ENCODE measurements at regions of chr9 and their contacts with region 1.

Region 1: GRCh38 chr9:22052376-22052945 is 43.4 kb upstream of the CDKN2B start:
- DNase-seq: peak; percentile 76
- ATAC-seq: peak; percentile 89
- H3K4me3 Mint-ChIP-seq: no peak overlapping the region
- H3K27ac Mint-ChIP-seq: peak overlapping the region; percentile 65
- H3K4me1 Mint-ChIP-seq: peaks cover 34% of the 10 kb centered on the region
- H3K27me3 Mint-ChIP-seq: no peaks in the 10 kb centered on the region
- CTCF ChIP-seq: no peak

Region 2: DNA sequence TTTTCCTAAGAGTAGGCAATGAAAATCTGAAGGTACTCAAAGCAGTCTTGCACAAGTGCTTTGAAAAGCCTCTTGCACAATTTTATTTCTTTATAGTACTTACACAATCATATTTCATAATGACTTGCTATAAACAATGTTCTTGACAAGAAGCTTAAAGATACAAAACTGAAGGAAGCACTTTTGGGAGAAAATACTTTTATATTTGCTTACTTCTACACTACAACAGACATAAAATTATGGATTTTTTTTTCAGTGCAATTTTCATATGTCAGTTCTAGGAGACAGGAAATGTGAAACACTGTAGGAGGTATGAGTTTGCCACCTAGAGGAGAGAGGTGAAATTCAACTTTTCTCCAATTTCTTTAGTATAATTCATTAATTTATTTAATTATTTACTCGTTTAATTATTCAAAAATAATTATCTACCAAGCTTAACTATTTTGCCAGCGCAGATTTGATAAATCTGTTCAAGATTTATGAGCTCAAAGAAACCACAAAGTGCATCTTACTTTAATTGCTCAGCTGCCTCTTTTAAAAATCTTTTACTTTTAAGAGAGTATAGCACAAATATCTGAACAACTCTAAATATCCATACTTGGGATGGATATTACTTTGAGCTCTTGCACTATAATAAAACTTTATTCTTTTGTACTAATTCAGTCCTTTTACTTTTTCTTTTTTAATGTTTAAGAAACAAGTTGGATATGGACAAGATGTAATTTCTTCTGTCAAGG is 14.3 kb before region 1 on chr9:
- CTCF ChIA-PET with region 1: interaction called, 47 read pairs
- POLR2A ChIA-PET with region 1: no interaction called
- intact Hi-C with region 1: no loop called
- DNase-seq: no peak
- ATAC-seq: peak; percentile 47
- H3K4me3 Mint-ChIP-seq: no peak overlapping the region
- H3K27ac Mint-ChIP-seq: no peak overlapping the region
- H3K4me1 Mint-ChIP-seq: peaks cover 23% of the 10 kb centered on the region
- H3K27me3 Mint-ChIP-seq: no peaks in the 10 kb centered on the region
- CTCF ChIP-seq: peak; percentile 83

Region 3: GRCh38 chr9:22079873-22080341 is 27.4 kb after region 1 on chr9:
- CTCF ChIA-PET with region 1: interaction called, 18 read pairs
- POLR2A ChIA-PET with region 1: interaction called, 7 read pairs
- intact Hi-C with region 1: loop called (anchors 2 kb)
- DNase-seq: peak; percentile 82
- ATAC-seq: peak; percentile 95
- H3K4me3 Mint-ChIP-seq: peak overlapping the region; percentile 16
- H3K27ac Mint-ChIP-seq: peak overlapping the region; percentile 72
- H3K4me1 Mint-ChIP-seq: peaks cover 43% of the 10 kb centered on the region
- H3K27me3 Mint-ChIP-seq: peaks cover 26% of the 10 kb centered on the region
- CTCF ChIP-seq: no peak

Region 4: GRCh38 chr9:22105005-22105722 is 52.7 kb after region 1 on chr9:
- CTCF ChIA-PET with region 1: interaction called, 4 read pairs
- POLR2A ChIA-PET with region 1: no interaction called
- intact Hi-C with region 1: loop called (anchors 5 kb)
- DNase-seq: peak; percentile 48
- ATAC-seq: peak; percentile 97
- H3K4me3 Mint-ChIP-seq: no peak overlapping the region
- H3K27ac Mint-ChIP-seq: no peak overlapping the region
- H3K4me1 Mint-ChIP-seq: peaks cover 16% of the 10 kb centered on the region
- H3K27me3 Mint-ChIP-seq: peaks cover 3% of the 10 kb centered on the region
- CTCF ChIP-seq: no peak

Region 5: DNA sequence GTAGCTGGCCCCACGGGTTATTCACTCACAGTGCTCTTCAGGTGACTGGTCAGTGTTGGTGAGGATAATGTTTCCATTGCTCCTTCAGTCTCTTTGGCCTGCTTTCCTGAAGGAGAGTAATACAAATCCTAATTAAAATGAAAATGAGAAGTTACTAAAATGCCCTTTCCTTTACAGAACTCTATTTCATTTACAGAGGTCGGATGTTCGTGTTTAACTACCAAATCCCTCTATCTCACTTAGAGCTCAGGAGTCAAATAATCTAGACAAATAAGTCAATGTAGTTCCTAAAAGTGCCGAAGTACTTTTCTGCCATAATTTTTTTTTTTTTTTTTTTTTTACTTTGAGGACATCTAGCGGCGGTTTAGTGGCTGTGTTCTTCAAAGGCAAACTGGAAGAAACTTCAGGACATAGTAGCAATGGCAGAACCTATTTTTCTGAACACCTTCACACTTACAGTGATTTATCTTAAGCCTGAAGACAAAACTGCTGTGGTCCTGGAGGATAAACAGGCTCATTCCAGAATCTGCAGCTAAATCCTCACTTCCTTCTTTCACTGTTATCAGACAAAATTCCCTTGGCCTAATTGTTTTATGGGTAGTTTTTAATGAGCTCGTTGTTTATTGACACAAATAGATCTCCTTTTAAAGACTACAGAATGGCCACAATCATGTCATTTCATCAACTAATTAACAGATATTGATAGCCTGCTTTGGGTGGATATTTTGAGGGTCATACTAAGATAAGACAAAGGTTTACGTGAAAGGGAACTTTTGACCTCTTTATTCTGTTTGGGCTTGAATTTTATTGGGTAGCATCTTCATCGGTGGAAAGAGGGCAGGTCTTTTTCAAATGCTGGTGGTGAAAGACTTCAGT is 186.6 kb after region 1 on chr9:
- CTCF ChIA-PET with region 1: interaction called, 8 read pairs
- POLR2A ChIA-PET with region 1: no interaction called
- intact Hi-C with region 1: loop called (anchors 2 kb)
- DNase-seq: no peak
- ATAC-seq: no peak
- H3K4me3 Mint-ChIP-seq: no peak overlapping the region
- H3K27ac Mint-ChIP-seq: no peak overlapping the region
- H3K4me1 Mint-ChIP-seq: peaks cover 53% of the 10 kb centered on the region
- H3K27me3 Mint-ChIP-seq: peaks cover 5% of the 10 kb centered on the region
- CTCF ChIP-seq: peak; percentile 34

Measured in activated CD8-positive, alpha-beta T cell treated with anti-CD3 and anti-CD28 coated beads for 36 hours (primary cell).